ENCODE measurements at regions of chr1 and their contacts with region 1.

Region 1: GRCh38 chr1:87328272-87329050 is at the start of gene LMO4:
- DNase-seq: peak; percentile 91
- H3K4me3 Mint-ChIP-seq: peak within 1 kb of the TSS; percentile 91
- H3K27ac Mint-ChIP-seq: peak within 1 kb of the TSS; percentile 81
- H3K4me1 Mint-ChIP-seq: peaks cover 33% of the 10 kb centered on the region
- H3K27me3 Mint-ChIP-seq: peaks cover 24% of the 10 kb centered on the region
- total RNA-seq, gene LMO4: 15.5 to 19.5 TPM

Region 2: GRCh38 chr1:86395771-86396497 is 932.5 kb before region 1 on chr1 and contains the start of gene ODF2L:
- CTCF ChIA-PET with region 1: no interaction called
- intact Hi-C with region 1: loop called (anchors 5 kb)
- DNase-seq: peak; percentile 94
- H3K4me3 Mint-ChIP-seq: peak within 1 kb of the TSS; percentile 95
- H3K27ac Mint-ChIP-seq: peak within 1 kb of the TSS; percentile 91
- H3K4me1 Mint-ChIP-seq: peaks cover 44% of the 10 kb centered on the region
- H3K27me3 Mint-ChIP-seq: no peaks in the 10 kb centered on the region
- total RNA-seq, gene ODF2L: 17.8 to 18.0 TPM

Region 3: GRCh38 chr1:86913896-86914634 is 414.4 kb before region 1 on chr1 and contains the start of gene SELENOF:
- CTCF ChIA-PET with region 1: no interaction called
- intact Hi-C with region 1: loop called (anchors 2 kb)
- DNase-seq: peak; percentile 100
- H3K4me3 Mint-ChIP-seq: no peak within 1 kb of the TSS
- H3K27ac Mint-ChIP-seq: peak within 1 kb of the TSS; percentile 53
- H3K4me1 Mint-ChIP-seq: peaks cover 47% of the 10 kb centered on the region
- H3K27me3 Mint-ChIP-seq: no peaks in the 10 kb centered on the region
- total RNA-seq, gene SELENOF: 111 to 115 TPM

Region 4: DNA sequence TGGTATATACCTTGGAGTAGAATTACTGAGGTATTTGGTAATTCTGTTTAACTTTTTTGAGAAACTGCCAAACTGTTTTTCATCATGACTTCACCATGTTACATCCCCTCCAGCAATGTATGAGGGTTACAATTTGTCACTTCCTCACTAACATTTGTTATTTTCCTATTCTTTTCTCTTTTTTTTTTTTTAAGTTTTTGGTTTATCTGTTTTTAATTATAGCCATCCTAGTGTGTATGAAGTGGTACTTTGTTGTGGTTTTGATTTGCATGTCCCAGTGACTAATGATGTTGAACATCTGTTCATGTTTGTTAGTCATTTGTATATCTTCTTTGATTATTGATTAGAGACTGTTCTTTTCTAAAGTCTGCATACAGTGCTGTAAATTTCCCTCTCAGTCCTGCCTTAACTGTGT is 266.7 kb before region 1 on chr1:
- CTCF ChIA-PET with region 1: no interaction called
- intact Hi-C with region 1: no loop called
- DNase-seq: no peak
- H3K4me3 Mint-ChIP-seq: no peak overlapping the region
- H3K27ac Mint-ChIP-seq: no peak overlapping the region
- H3K4me1 Mint-ChIP-seq: peaks cover 28% of the 10 kb centered on the region
- H3K27me3 Mint-ChIP-seq: no peaks in the 10 kb centered on the region

Region 5: GRCh38 chr1:87151500-87152421 is 176.7 kb before region 1 on chr1:
- CTCF ChIA-PET with region 1: interaction called, 3 read pairs
- intact Hi-C with region 1: loop called (anchors 2 kb)
- DNase-seq: peak; percentile 62
- H3K4me3 Mint-ChIP-seq: peak overlapping the region; percentile 70
- H3K27ac Mint-ChIP-seq: no peak overlapping the region
- H3K4me1 Mint-ChIP-seq: peaks cover 12% of the 10 kb centered on the region
- H3K27me3 Mint-ChIP-seq: peaks cover 34% of the 10 kb centered on the region

Region 6: GRCh38 chr1:87501738-87502137 is 173.3 kb after region 1 on chr1:
- CTCF ChIA-PET with region 1: no interaction called
- intact Hi-C with region 1: loop called (anchors 2 kb)
- DNase-seq: no peak
- H3K4me3 Mint-ChIP-seq: no peak overlapping the region
- H3K27ac Mint-ChIP-seq: no peak overlapping the region
- H3K4me1 Mint-ChIP-seq: peaks cover 2% of the 10 kb centered on the region
- H3K27me3 Mint-ChIP-seq: no peaks in the 10 kb centered on the region

Region 7: DNA sequence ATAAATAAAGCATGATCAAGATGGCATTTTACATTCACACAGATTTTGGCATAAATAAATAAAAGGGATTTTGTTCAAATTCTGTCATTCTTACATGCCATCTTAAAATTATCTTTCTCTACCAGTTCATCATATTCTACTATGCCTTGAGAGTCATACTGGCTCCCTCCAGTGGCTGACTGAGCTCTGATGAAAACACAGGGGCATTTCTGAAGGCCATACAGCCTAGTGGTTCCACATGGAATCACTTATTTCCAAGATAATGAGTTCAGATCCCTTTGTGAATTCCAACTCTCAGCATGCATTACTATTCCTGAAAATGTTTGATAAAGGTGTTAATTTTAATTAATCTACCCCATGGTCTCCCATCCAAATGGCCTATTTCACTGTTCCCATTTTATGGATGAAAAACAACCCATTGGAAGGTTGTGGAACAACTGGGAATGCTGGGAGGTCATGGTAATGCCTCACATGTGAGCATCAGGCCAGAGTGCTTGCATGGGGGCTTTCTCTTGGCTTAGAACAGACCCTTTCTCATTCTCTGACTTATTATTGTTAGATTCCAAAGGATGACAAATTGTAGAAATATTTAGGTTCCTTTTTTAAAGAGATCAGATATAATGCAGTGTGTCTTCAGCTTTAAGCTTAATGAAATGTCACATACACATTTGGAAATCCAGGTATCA is 733.2 kb after region 1 on chr1:
- CTCF ChIA-PET with region 1: no interaction called
- intact Hi-C with region 1: loop called (anchors 1 kb)
- DNase-seq: peak; percentile 44
- H3K4me3 Mint-ChIP-seq: no peak overlapping the region
- H3K27ac Mint-ChIP-seq: no peak overlapping the region
- H3K4me1 Mint-ChIP-seq: no peaks in the 10 kb centered on the region
- H3K27me3 Mint-ChIP-seq: peaks cover 5% of the 10 kb centered on the region

Region 8: DNA sequence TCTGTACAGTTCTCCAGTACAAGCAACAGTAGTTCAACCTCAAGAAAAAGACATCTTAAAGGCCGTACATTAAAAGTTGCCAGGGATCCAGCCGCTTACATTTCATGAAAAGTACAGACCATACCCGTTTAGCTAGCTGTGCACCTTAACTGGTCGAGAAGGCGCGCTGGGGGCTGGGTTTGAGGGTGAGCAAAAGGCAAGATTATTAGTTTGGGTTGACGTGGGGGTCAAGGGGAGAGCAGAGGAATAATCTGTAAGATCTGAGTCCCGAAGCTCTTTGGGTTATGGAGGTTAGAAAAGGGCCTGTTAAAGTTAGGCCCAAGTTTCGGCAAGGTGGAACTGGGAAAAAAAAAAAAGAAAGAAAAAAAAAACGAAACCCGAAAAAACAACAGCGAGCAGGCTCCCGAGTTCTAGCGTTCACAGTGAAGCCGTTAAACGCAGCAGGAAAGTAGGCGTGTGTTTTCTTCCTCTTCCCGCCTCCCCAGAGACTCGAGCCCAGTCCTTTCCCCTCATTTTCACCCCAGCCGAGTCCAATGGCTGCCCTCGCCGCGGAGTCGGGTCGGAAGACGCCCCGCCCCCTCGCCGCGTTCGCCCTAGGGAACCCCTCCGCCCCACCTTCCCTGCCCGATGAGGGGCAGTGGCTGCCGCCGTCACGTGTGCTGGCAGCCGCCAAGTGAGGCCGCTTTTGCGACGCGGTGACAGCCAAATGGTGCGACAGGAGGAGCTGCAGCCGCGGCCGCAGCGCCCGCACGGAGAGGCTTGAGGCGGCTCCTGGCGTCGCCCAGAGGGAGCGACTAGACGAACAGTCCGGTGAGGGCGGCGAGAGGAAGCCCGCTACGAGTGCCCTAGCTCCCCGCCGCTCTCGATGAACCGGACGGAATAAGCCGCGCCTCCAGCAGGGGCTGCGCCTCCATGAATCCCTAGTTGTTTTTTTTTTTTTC is 1355.3 kb after region 1 on chr1 and contains the start of gene PKN2:
- CTCF ChIA-PET with region 1: no interaction called
- intact Hi-C with region 1: loop called (anchors 2 kb)
- DNase-seq: peak; percentile 98
- H3K4me3 Mint-ChIP-seq: peak within 1 kb of the TSS; percentile 97
- H3K27ac Mint-ChIP-seq: peak within 1 kb of the TSS; percentile 93
- H3K4me1 Mint-ChIP-seq: peaks cover 31% of the 10 kb centered on the region
- H3K27me3 Mint-ChIP-seq: no peaks in the 10 kb centered on the region
- total RNA-seq, gene PKN2: 17.2 to 17.9 TPM

Measured in activated naive CD4-positive, alpha-beta T cell treated with anti-CD3 and anti-CD28 coated beads for 36 hours (primary cell).